Mammary epithelial cell (primary cell): ENCODE measurements at regions of chr6 and their contacts with region 1.

Region 1: GRCh38 chr6:142692942-142693341 is 252.0 kb downstream of the HIVEP2 start:
- DNase-seq: peak; percentile 57
- H3K4me3 ChIP-seq: no peak overlapping the region
- H3K27ac ChIP-seq: no peak overlapping the region
- H3K4me1 ChIP-seq: peaks cover 22% of the 10 kb centered on the region
- H3K27me3 ChIP-seq: no peaks in the 10 kb centered on the region
- CTCF ChIP-seq: peak; percentile 91 to 92

Region 2: DNA sequence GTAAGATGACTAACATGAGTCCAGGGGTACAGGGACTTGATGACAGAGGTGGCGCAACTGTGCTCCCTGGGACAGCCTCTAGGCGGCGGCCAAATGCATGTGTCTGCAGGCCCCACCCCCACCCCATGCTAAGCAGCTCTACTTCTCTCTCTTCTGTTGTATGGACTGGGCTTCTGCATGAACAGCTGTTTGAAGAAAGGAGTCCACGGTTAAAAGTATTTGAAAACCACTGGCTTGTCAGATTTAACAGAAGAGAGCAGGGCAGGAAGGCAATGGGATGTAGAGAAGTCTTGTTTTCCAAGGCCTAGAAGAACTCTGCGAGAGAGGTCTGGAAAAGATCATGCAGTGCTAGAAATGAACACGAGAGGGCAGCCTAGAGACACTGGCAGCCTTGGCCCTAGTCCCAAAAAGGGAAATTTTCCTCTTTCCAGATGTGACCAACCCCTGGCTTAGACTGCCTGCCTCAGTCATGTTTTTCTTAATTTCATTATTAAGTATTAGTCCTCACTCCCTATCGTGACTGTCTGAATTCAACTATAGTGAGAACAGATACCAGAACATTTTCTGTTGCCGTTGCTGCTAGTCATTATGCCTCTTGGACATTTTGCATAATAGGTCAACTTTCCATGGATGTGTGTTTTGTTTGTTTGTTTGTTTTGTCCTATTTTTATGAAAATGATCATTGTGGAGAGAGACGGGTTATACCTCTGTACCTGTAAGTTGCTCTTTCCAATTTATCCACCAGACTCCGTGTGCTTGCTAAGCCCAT is 126.1 kb before region 1 on chr6:
- CTCF ChIA-PET with region 1: no interaction called
- dilution Hi-C with region 1: no loop called
- in situ Hi-C with region 1: loop called in 1 of 2 experiments (anchors 5 kb)
- intact Hi-C with region 1: loop called (anchors 2 kb)
- DNase-seq: peak; percentile 52
- H3K4me3 ChIP-seq: no peak overlapping the region
- H3K27ac ChIP-seq: no peak overlapping the region
- H3K4me1 ChIP-seq: peaks cover 35% of the 10 kb centered on the region
- H3K27me3 ChIP-seq: no peaks in the 10 kb centered on the region
- CTCF ChIP-seq: peak; percentile 95 to 99

Region 3: DNA sequence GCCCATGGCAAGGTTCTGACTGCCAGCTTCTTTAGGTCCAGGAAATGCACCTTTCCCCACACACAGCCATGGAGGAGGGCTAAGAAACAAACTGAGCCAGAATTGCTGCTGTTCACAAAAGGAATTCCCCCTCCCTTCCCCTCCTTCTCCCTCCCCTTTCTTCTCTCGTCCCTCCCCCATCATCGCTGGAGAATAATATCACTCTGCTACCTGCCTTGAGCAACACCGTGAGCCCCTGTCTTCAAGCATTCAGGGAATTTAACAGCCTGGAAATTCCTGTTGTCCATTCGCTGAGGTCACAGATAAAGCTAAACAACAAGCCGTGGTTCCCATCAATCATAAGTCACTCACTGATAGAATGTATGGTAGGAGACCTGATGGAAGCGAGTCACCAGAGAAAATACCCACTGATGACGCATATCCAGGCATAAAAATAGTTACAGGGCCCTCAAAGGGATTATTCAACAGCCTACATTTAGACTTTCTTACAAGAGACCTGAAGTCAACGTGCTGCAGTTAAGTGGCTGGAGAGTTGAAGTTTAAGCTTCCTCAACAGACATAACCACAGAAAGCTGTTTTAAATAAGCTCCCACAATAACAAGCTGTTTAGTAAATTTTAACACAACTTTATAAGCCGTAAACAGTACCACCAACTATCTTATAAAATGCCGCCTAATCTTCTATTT is 192.4 kb after region 1 on chr6:
- CTCF ChIA-PET with region 1: no interaction called
- dilution Hi-C with region 1: no loop called
- in situ Hi-C with region 1: no loop called
- intact Hi-C with region 1: loop called (anchors 2 kb)
- DNase-seq: peak; percentile 99
- H3K4me3 ChIP-seq: peak overlapping the region; percentile 7 to 37 (median 29)
- H3K27ac ChIP-seq: peak overlapping the region; percentile 86
- H3K4me1 ChIP-seq: peaks cover 25% of the 10 kb centered on the region
- H3K27me3 ChIP-seq: no peaks in the 10 kb centered on the region
- CTCF ChIP-seq: no peak

Region 4: GRCh38 chr6:143232849-143233248 is 539.9 kb after region 1 on chr6:
- CTCF ChIA-PET with region 1: no interaction called
- dilution Hi-C with region 1: no loop called
- in situ Hi-C with region 1: no loop called
- intact Hi-C with region 1: loop called (anchors 2 kb)
- DNase-seq: peak; percentile 20
- H3K4me3 ChIP-seq: no peak overlapping the region
- H3K27ac ChIP-seq: no peak overlapping the region
- H3K4me1 ChIP-seq: peaks cover 7% of the 10 kb centered on the region
- H3K27me3 ChIP-seq: no peaks in the 10 kb centered on the region
- CTCF ChIP-seq: peak; percentile 70 to 91

Region 5: DNA sequence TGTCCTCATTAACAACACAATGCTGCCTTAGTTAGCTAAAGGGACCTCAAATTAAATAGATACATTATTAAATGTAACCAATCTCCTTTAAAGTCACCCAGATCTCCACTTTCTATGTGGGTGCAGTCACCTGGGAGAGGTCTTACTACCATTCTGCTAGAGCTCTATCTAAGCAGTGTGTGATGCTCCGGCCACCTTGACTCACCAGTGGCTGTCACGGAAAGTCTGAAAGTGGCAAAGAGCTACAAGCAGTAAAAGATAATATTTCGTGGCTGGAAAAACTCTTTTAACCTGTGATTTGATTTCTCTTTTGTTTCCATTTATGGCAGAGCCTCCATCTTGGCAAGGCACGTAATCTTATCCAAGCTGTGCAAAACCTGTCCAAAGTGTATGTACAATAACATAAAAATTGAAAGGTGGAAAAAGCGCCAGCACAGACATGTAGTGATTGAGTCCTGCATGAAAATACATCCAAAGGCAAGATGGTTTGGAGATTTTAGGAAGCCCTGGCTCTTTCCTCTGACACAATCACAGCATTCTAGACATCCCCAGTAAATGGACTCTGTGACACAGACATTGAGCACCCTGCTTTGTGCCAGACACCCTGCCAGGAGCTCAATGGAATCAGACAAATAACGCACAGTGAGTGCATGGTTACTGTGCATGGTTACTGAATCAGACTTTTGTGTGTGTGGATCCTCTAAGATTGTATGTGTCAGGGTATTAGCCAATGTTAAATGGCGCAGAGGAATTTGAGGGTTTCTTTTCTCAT is 641.0 kb after region 1 on chr6:
- CTCF ChIA-PET with region 1: no interaction called
- dilution Hi-C with region 1: no loop called
- in situ Hi-C with region 1: no loop called
- intact Hi-C with region 1: loop called (anchors 5 kb)
- DNase-seq: peak; percentile 52
- H3K4me3 ChIP-seq: peak overlapping the region in 2 of 3 experiments; percentile 9 to 21
- H3K27ac ChIP-seq: peak overlapping the region; percentile 98
- H3K4me1 ChIP-seq: peaks cover 73% of the 10 kb centered on the region
- H3K27me3 ChIP-seq: no peaks in the 10 kb centered on the region
- CTCF ChIP-seq: no peak

Region 6: GRCh38 chr6:143501851-143502250 is 808.9 kb after region 1 on chr6:
- CTCF ChIA-PET with region 1: no interaction called
- dilution Hi-C with region 1: no loop called
- in situ Hi-C with region 1: no loop called
- intact Hi-C with region 1: loop called (anchors 1 kb)
- DNase-seq: no peak
- H3K4me3 ChIP-seq: no peak overlapping the region
- H3K27ac ChIP-seq: no peak overlapping the region
- H3K4me1 ChIP-seq: no peaks in the 10 kb centered on the region
- H3K27me3 ChIP-seq: no peaks in the 10 kb centered on the region
- CTCF ChIP-seq: peak in 1 of 2 donors; percentile 17